PC-9 (cell line): ENCODE measurements at regions of chr15 and their contacts with region 1.

Region 1: GRCh38 chr15:75947092-75947491 is 43.4 kb downstream of the FBXO22 start:
- DNase-seq: no peak
- H3K4me3 ChIP-seq: no peak overlapping the region
- H3K27ac ChIP-seq: no peak overlapping the region
- H3K4me1 ChIP-seq: no peaks in the 10 kb centered on the region
- H3K27me3 ChIP-seq: no peaks in the 10 kb centered on the region
- CTCF ChIP-seq: no peak

Region 2: GRCh38 chr15:74857082-74857655 is 1089.9 kb before region 1 on chr15:
- CTCF ChIA-PET with region 1: no interaction called
- POLR2A ChIA-PET with region 1: no interaction called
- intact Hi-C with region 1: no loop called
- DNase-seq: peak; percentile 69 to 70
- H3K4me3 ChIP-seq: no peak overlapping the region
- H3K27ac ChIP-seq: peak overlapping the region; percentile 49
- H3K4me1 ChIP-seq: peaks cover 21% of the 10 kb centered on the region
- H3K27me3 ChIP-seq: no peaks in the 10 kb centered on the region
- CTCF ChIP-seq: no peak

Region 3: DNA sequence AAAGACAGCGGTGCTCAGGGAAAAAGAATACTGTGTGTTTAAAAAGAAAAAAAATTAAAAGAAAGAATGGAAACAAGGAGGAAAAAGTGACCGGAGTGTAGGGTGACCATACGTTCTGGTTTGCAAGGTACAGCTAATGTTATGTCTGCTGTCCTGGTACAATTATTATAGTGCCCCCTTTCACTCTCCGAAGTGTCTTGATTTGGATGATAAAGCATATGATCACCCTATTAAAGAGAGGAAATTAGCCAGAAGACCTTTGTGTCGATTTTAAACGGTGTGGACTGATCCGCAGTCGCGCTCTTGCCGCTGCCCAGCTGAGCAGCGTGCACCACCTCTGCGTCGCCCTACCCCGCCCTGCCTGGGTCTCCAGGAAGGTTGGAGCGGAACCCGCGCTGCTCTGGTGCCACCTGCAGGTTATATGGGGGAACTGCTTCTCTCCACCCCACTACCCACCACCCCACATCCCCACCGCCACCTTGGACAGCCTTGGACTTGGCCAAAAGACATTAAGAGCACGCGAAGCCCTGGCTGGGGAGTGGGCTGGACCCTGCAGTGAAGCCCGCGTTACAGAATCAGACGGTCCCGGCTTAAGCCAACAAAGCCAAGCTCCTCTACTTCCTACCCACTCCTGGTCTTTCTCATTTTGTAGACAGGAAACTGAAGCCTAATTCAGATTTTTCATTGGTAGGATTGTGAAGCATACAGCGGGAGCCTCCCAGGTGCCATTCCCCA is 145.1 kb before region 1 on chr15:
- CTCF ChIA-PET with region 1: no interaction called
- POLR2A ChIA-PET with region 1: no interaction called
- intact Hi-C with region 1: no loop called
- DNase-seq: peak in 1 of 2 experiments; percentile 78
- H3K4me3 ChIP-seq: peak overlapping the region; percentile 23; the same call in 1 of the 2 replicates
- H3K27ac ChIP-seq: no peak overlapping the region
- H3K4me1 ChIP-seq: peaks cover 5% of the 10 kb centered on the region; the same call in 1 of the 2 replicates
- H3K27me3 ChIP-seq: peaks cover 30% of the 10 kb centered on the region
- CTCF ChIP-seq: peak; percentile 82

Region 4: DNA sequence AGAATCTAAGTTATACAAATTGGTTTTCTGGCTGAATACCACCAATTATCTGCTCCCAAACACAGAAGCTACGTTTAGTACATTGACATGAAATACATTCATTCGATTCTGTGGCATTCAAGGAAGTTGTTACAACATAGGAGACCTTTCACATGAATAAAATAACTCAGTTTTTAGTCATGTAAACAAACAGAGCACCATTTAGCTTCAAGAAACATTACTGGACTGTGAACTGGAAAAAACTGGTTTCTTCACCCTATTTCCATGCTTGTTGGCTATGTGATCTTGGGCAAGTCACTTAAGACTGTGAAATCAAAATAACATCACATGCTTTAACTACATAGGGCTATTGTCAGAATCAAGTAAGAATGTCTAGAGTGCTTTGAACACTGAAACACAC is 19.0 kb after region 1 on chr15:
- CTCF ChIA-PET with region 1: interaction called, 11 read pairs
- POLR2A ChIA-PET with region 1: interaction called, 7 read pairs
- intact Hi-C with region 1: no loop called
- DNase-seq: peak in 1 of 2 experiments; percentile 77
- H3K4me3 ChIP-seq: no peak overlapping the region
- H3K27ac ChIP-seq: peak overlapping the region; percentile 27; the same call in 1 of the 2 replicates
- H3K4me1 ChIP-seq: peaks cover 16% of the 10 kb centered on the region
- H3K27me3 ChIP-seq: no peaks in the 10 kb centered on the region
- CTCF ChIP-seq: no peak

Region 5: GRCh38 chr15:76012021-76012551 is 65.0 kb after region 1 on chr15 and contains the start of gene NRG4:
- CTCF ChIA-PET with region 1: no interaction called
- POLR2A ChIA-PET with region 1: interaction called, 27 read pairs
- intact Hi-C with region 1: no loop called
- DNase-seq: peak; percentile 36 to 57
- H3K4me3 ChIP-seq: peak within 1 kb of the TSS; percentile 43
- H3K27ac ChIP-seq: peak within 1 kb of the TSS; percentile 65
- H3K4me1 ChIP-seq: peaks cover 19% of the 10 kb centered on the region
- H3K27me3 ChIP-seq: no peaks in the 10 kb centered on the region
- CTCF ChIP-seq: no peak
- total RNA-seq, gene NRG4: 5.2 and 11.3 TPM in 2 replicates